ENCODE measurements at regions of chr5 and their contacts with region 1.

Region 1: DNA sequence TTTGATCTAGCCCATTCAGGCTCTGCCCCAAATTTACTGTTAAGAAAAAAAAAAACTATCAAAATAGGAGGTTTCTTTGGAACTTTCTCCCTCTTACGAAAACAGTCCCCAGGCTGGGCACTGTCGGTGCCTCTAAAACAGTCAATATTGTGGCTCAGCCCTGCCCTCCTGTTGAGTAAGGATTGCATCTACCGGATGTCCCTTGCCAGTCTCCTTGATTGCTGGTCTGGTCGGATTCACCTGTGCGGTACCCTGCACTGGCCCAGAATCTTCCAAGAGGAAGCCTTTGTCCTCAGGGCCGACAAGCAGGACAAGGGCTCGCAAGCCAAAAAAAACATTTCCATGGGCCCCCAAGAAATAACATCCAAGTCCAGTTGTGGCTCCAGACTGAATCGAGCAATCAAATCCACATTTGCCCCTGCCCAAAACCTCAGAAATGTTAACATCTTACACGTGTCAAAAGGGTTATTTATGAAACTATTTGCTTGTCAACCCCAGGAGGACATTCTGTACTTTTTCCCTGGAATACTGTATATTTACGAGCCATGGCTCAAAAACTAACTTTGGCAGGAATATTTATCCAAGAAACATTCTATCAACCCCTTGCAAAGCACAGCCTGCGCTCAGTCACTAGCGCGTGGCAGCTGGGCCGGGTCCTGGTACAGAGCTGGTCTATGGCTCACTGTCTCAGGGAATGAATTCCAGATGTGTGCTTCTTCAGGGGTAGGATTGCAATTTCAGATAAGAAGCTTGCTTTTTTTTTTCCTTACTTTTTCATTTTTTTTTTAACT is 129.2 kb upstream of the ADRA1B start:
- DNase-seq: no peak
- H3K4me3 ChIP-seq: no peak overlapping the region
- H3K27ac ChIP-seq: no peak overlapping the region
- H3K4me1 ChIP-seq: 0 out of 2 replicates have a peak, but pooled peaks cover 3% of the 10 kb centered on the region
- H3K27me3 ChIP-seq: no peaks in the 10 kb centered on the region
- CTCF ChIP-seq: no peak

Region 2: DNA sequence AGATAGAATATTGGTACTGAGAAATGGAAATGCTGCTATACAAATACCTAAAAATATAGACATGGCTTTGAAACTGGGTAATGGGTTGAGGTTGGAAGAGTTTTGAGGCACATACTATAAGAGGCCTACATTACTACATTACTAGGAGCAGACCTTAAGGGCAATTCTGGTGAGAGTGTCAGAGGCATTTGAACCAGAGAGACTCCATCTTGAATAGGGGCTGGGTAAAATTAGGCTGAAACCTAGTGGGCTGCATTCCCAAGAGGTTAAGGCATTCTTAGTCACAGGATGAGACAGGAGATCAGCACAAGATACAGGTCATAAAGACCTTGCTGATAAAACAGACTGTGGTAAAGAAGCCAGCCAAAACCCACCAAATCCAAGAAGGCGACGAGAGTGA is 24.6 kb after region 1 on chr5:
- CTCF ChIA-PET with region 1: interaction called, 11 read pairs
- POLR2A ChIA-PET with region 1: no interaction called
- intact Hi-C with region 1: no loop called
- DNase-seq: no peak
- H3K4me3 ChIP-seq: no peak overlapping the region
- H3K27ac ChIP-seq: no peak overlapping the region
- H3K4me1 ChIP-seq: peaks cover 17% of the 10 kb centered on the region
- H3K27me3 ChIP-seq: no peaks in the 10 kb centered on the region
- CTCF ChIP-seq: no peak